ENCODE measurements at regions of chr10 and their contacts with region 1.

Region 1: DNA sequence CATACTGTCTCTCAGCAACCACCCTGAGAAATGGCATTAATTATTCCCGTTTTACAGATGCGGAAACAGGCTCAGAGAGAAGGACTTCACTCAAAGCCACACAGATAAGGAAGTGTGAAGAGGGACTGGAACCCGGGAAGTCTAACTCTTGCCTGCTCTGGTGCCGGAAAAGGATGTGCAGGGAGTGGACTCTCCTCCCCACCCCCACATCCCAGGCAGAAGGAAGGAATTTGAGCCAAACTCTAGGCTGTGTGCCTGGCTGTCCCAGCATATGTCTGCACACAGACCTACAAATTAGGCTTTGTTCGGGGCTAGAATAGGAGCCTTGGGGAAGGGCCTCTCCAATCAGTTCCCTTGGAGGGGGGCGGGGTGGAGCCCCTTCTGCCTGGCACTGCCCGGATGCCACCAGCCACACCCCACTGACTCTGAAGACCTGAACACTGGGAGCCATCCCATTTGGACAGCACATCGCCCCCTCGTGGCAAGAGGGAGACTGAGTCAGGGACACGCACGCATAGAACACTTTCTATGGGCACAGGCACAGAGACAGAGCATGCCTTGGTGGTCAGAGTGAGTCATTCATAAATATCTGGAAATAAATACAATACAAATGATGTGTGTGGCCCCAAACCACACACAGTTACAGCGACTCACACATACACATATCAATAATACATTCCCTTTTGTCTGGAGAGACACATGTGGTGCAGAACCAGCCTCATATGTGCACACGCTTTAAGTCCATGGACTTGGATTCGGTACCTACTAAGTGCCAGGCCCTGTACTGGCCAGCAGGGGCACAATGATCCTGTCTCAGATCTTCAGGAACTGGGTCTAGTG is 13.1 kb downstream of the LZTS2 start:
- DNase-seq: peak; percentile 89 to 93
- ATAC-seq: peak; percentile 84 to 94 (median 90)
- H3K4me3 ChIP-seq: peak overlapping the region in 1 of 10 donors; percentile 14
- H3K27ac ChIP-seq: peak overlapping the region in 9 of 10 donors; percentile 32 to 70 (median 45)
- H3K4me1 ChIP-seq: peaks cover 9 to 47% (median 27%) of the 10 kb centered on the region in 9 donors
- H3K27me3 ChIP-seq: peaks cover 0 to 15% (median 12%) of the 10 kb centered on the region in 7 donors
- CTCF ChIP-seq: peak; percentile 90 to 97 (median 92)

Region 2: GRCh38 chr10:100968863-100969186 is 43.9 kb before region 1 on chr10:
- intact Hi-C with region 1: loop called in 1 of 10 experiments (anchors 1 kb)
- DNase-seq: no peak
- ATAC-seq: peak in 4 of 8 donors; percentile 12 to 29 (median 14)
- H3K4me3 ChIP-seq: peak overlapping the region; percentile 27 to 67 (median 58)
- H3K27ac ChIP-seq: no peak overlapping the region
- H3K4me1 ChIP-seq: peaks cover 3 to 23% (median 15%) of the 10 kb centered on the region in 9 donors
- H3K27me3 ChIP-seq: peaks cover 0 to 7% (median 0%) of the 10 kb centered on the region in 7 donors
- CTCF ChIP-seq: no peak

Region 3: DNA sequence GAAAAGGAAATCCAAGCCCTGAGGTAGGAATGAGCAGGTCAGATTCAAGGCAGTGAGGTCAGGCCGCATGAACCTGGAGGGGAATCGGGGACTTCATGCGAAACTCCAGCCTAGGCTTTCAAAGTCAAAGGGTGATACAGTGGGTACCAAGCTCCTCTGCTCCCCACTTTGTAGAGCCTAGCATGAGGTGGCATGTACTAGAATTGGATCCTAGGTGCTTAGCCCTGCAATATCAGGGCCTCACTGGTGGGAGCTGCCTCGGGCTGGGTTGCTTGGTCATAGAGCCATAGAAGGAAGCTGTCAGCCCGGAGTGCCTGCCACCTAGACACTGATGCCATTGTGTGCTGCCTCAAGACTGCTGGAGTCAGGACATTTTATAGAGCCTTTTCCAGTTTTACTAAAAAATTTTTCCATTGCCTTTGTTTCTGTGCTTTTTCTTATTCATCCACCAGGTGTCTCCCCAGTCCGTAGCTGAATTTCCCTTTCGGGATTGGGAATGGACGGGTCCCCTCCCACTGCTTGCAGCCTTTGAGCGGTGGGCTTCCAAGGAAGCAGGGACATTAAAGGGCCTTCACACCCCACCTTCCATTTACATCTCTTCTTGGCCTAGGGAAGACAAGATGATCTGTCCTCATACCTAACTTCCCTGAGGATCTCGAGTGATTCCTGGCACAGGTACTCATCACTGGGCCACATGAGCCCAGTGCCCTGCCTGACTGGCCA is 18.6 kb before region 1 on chr10:
- intact Hi-C with region 1: loop called (anchors 1 to 2 kb)
- DNase-seq: no peak
- ATAC-seq: no peak
- H3K4me3 ChIP-seq: no peak overlapping the region
- H3K27ac ChIP-seq: no peak overlapping the region
- H3K4me1 ChIP-seq: peaks cover 4 to 30% (median 21%) of the 10 kb centered on the region in 9 donors
- H3K27me3 ChIP-seq: no peaks in the 10 kb centered on the region
- CTCF ChIP-seq: peak; percentile 56 to 82 (median 72)

Region 4: DNA sequence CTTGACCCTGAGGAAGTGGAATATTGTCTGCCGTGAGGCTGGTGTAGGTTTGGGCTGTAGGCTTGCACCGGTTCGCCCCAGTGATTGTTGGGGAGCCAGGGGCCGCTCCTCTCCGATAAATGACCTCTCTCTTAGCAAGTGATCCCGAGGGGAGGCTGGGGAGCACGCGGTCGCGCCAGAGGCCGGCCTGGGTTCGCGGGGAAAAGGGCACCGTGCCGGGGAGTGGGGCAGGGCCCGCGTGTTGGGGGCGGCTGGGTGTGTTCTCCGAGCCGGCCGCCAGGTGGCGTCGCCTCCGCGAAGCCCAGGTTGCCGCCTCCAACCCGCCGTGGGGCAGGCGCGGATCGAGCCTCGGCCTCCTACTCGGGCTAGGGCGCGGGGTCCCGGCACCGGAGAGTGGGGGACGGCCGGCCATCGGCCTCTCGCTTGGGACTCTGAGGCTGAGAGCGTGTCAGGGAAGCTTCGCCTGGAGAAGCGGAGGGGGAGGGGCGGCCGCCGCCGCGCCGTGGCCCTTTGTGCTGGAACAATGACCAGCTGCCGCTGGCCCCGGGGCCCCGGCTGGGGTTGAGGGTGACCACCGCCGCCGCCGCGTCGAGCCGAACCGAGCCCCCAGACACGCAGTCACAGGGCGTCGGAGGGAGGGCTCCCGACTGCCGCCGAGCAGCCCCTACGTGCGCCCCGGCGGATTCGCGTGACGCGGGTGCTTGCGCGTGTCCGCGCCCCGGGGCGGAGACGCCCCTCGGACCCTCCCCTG is 13.6 kb before region 1 on chr10:
- intact Hi-C with region 1: loop called (anchors 1 to 2 kb)
- DNase-seq: peak; percentile 84 to 88
- ATAC-seq: peak; percentile 62 to 79 (median 72)
- H3K4me3 ChIP-seq: peak overlapping the region; percentile 61 to 93 (median 85)
- H3K27ac ChIP-seq: peak overlapping the region; percentile 98 to 100 (median 100)
- H3K4me1 ChIP-seq: peaks cover 16 to 67% (median 58%) of the 10 kb centered on the region in 9 donors
- H3K27me3 ChIP-seq: no peaks in the 10 kb centered on the region
- CTCF ChIP-seq: peak; percentile 94 to 99 (median 97)